Mammary epithelial cell (primary cell): ENCODE measurements at regions of chr14 and their contacts with region 1.

Region 1: GRCh38 chr14:68520637-68521556 is 272.0 kb downstream of the ZFP36L1 start:
- DNase-seq: peak; percentile 97
- H3K4me3 ChIP-seq: no peak overlapping the region
- H3K27ac ChIP-seq: peak overlapping the region; percentile 96
- H3K4me1 ChIP-seq: peaks cover 44% of the 10 kb centered on the region
- H3K27me3 ChIP-seq: no peaks in the 10 kb centered on the region
- CTCF ChIP-seq: no peak

Region 2: DNA sequence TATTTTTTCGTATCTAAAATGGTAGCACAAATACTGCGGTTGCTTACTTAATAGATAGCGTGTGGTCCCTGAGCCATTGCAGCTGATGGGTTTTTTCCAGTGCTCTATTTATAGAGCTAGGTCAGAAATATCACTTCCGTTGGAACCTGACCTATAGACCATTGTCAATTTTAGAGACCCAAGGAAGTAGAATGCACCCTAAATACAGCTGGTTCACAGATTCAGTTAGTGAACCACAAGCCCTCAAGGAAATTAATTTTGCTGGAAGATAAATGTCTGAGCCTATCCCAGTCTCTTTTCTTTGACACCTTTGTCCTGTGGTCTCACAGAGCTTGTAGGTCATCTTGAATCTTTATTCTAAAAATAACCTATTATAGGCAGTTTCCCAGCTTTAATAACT is 119.0 kb before region 1 on chr14:
- CTCF ChIA-PET with region 1: no interaction called
- dilution Hi-C with region 1: no loop called
- in situ Hi-C with region 1: no loop called
- intact Hi-C with region 1: loop called (anchors 1 kb)
- DNase-seq: no peak
- H3K4me3 ChIP-seq: no peak overlapping the region
- H3K27ac ChIP-seq: peak overlapping the region; percentile 83
- H3K4me1 ChIP-seq: peaks cover 77% of the 10 kb centered on the region
- H3K27me3 ChIP-seq: no peaks in the 10 kb centered on the region
- CTCF ChIP-seq: no peak

Region 3: GRCh38 chr14:68466491-68467032 is 54.3 kb before region 1 on chr14:
- CTCF ChIA-PET with region 1: no interaction called
- dilution Hi-C with region 1: no loop called
- in situ Hi-C with region 1: no loop called
- intact Hi-C with region 1: loop called (anchors 1 kb)
- DNase-seq: peak; percentile 91
- H3K4me3 ChIP-seq: no peak overlapping the region
- H3K27ac ChIP-seq: peak overlapping the region; percentile 84
- H3K4me1 ChIP-seq: peaks cover 78% of the 10 kb centered on the region
- H3K27me3 ChIP-seq: no peaks in the 10 kb centered on the region
- CTCF ChIP-seq: no peak

Region 4: GRCh38 chr14:68476212-68476907 is 44.5 kb before region 1 on chr14:
- CTCF ChIA-PET with region 1: interaction called, 3 read pairs
- dilution Hi-C with region 1: no loop called
- in situ Hi-C with region 1: no loop called
- intact Hi-C with region 1: loop called (anchors 2 kb)
- DNase-seq: peak; percentile 93
- H3K4me3 ChIP-seq: no peak overlapping the region
- H3K27ac ChIP-seq: peak overlapping the region; percentile 95
- H3K4me1 ChIP-seq: peaks cover 54% of the 10 kb centered on the region
- H3K27me3 ChIP-seq: no peaks in the 10 kb centered on the region
- CTCF ChIP-seq: no peak

Region 5: GRCh38 chr14:68487805-68488590 is 32.9 kb before region 1 on chr14:
- CTCF ChIA-PET with region 1: no interaction called
- dilution Hi-C with region 1: no loop called
- in situ Hi-C with region 1: no loop called
- intact Hi-C with region 1: loop called (anchors 2 kb)
- DNase-seq: peak; percentile 85
- H3K4me3 ChIP-seq: no peak overlapping the region
- H3K27ac ChIP-seq: peak overlapping the region; percentile 66
- H3K4me1 ChIP-seq: peaks cover 16% of the 10 kb centered on the region
- H3K27me3 ChIP-seq: no peaks in the 10 kb centered on the region
- CTCF ChIP-seq: no peak

Region 6: DNA sequence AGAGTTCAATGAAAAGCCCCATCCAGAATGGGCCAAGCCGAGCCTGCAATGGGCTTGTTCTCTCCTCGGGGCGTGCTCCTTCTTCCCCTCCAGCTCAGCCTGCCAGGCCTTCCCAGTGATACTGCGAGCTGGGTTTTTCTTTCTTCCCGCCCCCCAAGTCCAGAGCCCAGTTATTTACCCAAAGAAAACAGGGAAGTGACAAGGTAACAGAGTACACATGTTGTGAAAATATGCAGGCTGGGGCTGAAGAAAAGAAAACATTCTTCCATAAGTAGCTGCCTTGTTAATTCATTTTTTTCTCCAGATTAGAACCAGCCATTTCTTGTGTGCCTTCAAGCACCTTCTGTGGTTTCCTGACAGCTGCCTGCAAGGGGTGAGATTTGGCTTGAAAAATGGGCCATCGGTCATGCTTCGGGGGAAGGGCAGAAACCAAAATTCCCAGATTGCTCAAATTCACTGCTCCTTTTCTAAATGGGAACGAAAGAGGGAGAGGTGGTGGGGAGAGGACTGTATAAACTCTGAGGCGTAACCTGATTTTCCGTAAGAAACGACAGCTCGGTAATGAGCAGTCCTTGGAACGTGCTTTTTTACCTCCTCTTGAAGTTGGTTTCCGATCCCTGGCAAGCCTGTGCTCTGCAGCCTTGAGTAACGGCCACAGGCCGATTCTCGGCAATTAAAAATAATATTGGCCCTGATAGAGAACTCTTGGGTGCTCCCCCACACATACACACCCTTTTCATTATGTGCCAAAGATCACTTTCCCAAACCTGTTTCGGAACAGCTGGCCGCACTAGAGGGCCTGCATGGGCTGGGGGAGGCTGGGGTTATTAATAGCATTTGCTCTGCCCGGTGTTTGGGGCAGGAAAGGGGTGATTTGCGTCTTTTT is 42.6 kb after region 1 on chr14:
- CTCF ChIA-PET with region 1: no interaction called
- dilution Hi-C with region 1: no loop called
- in situ Hi-C with region 1: no loop called
- intact Hi-C with region 1: no loop called
- DNase-seq: peak; percentile 43
- H3K4me3 ChIP-seq: no peak overlapping the region
- H3K27ac ChIP-seq: no peak overlapping the region
- H3K4me1 ChIP-seq: peaks cover 9% of the 10 kb centered on the region
- H3K27me3 ChIP-seq: no peaks in the 10 kb centered on the region
- CTCF ChIP-seq: no peak

Region 7: DNA sequence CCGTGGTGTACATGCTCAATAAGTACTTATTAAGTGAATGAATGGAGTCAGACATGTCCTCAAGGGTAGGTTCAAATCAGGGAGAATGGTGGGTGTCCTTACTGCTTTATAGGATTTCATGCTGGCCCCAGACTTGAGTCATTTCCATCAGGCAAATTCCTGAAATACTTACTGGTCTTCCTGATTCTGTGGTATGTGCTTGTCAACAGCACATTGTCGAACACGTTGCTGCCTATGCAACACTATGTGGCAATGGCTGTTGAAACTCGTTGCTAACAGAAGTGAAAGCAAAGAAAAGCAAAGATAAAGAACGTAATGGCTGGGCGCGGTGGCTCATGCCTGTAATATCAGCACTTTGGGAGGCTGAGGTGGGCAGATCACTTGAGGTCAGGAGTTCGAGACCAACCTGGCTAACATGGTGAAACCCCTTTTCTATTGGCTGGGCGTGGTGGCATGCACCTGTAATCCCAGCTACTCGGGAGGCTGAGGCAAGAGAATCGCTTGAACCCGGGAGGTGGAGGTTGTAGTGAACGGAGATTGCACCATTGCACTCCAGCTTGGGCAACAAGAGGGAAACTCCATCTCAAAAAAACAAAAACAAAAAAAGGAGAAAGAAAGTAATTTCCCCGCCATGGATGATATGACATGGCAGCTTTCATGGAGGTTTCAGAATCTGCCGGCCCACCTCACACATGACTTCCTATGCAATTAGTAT is 57.1 kb after region 1 on chr14:
- CTCF ChIA-PET with region 1: no interaction called
- dilution Hi-C with region 1: no loop called
- in situ Hi-C with region 1: no loop called
- intact Hi-C with region 1: loop called (anchors 1 kb)
- DNase-seq: peak; percentile 96
- H3K4me3 ChIP-seq: no peak overlapping the region
- H3K27ac ChIP-seq: peak overlapping the region; percentile 82
- H3K4me1 ChIP-seq: peaks cover 40% of the 10 kb centered on the region
- H3K27me3 ChIP-seq: no peaks in the 10 kb centered on the region
- CTCF ChIP-seq: no peak

Region 8: DNA sequence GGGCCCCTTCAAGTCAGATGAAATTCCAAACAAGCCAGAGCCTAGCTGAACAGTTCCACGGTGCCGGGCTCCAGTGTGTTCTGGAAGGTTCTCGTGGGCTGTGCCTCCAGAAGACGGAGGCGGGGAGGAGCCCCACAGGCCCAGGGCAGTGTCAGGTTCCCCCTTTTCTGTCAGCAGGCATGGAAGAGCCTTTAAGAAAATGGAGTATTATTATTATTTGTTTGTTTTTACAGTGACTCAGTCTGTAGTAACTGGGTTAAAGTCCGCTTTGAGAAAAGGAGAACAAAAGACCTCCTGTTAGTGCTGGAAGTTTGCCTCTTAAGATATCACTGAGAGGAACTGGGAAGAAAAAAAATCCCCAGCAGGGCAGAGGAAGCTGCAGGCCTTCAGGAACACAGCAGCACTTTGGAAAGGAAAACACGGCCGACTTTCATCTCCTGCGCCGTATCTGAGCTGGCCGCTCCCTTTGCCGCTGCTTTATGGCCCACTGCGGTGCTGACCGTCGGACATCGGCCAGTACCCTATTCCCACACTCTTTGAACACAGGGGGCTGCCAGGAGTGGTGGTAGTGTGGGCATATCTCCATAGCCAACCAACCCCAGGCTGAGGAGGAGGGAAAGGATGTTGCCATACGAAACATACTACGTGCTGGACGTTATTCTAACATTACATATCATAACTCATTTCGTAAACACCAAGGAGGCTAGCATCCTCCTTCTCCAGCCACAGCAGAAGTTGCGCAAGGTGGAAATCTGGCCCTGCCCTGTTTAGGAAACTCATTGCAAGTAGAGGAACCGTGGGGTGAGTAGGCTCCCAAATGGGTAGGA is 77.9 kb after region 1 on chr14:
- CTCF ChIA-PET with region 1: no interaction called
- dilution Hi-C with region 1: no loop called
- in situ Hi-C with region 1: no loop called
- intact Hi-C with region 1: loop called (anchors 2 kb)
- DNase-seq: peak; percentile 94
- H3K4me3 ChIP-seq: peak overlapping the region in 1 of 3 experiments; percentile 2
- H3K27ac ChIP-seq: peak overlapping the region; percentile 85
- H3K4me1 ChIP-seq: peaks cover 27% of the 10 kb centered on the region
- H3K27me3 ChIP-seq: no peaks in the 10 kb centered on the region
- CTCF ChIP-seq: no peak

Region 9: DNA sequence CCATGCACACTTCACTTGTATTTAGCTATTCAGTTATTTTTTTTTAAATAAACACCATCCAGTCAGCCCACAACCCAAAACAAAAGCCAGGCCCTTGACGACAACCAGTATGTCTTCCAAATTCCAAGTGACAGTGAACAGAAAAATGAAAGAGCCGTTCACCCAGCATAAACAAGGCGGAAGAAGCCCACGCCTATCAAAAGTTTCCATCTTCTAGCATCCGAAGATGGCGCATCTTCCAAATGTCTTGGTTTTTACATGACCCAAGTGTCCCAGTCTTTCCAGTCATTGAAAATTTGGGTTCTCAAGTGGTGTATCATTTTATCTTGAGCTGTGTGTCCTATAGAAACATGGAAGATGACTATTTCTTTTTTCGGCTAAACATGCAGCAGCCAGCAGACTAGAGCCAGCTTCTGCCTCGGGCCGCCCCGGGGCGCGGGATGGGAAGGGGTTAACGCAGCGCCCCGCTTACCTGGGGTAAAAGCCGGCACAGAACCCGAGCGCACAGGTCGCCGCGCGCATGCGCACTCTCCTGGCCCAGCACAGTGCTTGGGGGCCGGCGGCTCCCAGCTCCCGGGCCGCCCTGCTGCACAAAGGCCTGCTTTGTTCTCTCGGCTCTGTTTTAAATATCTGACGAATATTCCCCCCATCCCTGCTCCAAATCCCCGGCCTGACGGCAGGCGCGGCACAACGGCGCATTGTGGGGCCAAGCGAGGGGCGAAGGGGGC is 107.1 kb after region 1 on chr14:
- CTCF ChIA-PET with region 1: no interaction called
- dilution Hi-C with region 1: no loop called
- in situ Hi-C with region 1: no loop called
- intact Hi-C with region 1: no loop called
- DNase-seq: peak; percentile 52
- H3K4me3 ChIP-seq: peak overlapping the region in 1 of 3 experiments; percentile 3
- H3K27ac ChIP-seq: no peak overlapping the region
- H3K4me1 ChIP-seq: peaks cover 25% of the 10 kb centered on the region
- H3K27me3 ChIP-seq: no peaks in the 10 kb centered on the region
- CTCF ChIP-seq: no peak